ENCODE measurements at regions of chr5 and their contacts with region 1.

Region 1: DNA sequence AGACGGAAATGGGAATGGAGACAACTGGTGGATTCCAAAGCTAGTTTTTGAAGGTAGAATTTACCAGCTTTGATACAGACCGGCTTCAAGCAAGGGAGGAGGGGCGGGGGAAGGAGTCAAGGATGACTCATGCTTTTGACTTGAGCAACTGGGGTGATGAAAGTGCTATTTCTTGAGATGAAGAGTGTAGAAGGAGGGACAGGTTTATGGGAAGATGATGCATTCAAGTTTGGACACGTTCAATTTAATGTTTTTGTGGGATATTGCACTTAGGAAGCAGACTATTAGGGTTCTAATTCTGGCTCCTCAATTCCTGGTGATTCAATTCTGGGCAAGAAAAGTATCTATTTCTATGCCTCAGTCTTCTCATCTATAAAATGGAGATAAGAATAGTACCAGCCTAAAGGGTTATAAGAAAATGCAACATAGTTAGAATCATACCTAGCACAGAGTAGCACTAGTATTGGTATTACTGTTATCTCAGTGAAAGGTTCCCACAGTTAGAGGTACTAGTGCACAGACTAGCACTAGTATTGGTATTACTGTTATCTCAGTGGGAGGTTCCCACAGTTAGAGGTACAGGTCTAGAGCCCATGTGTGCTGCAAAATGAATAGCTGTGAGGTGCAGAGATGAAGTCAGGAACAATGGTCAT is 4.6 kb downstream of the NIPAL4 start:
- DNase-seq: peak; percentile 99
- H3K4me3 Mint-ChIP-seq: peak overlapping the region; percentile 11
- H3K27ac Mint-ChIP-seq: peak overlapping the region; percentile 69
- H3K4me1 Mint-ChIP-seq: peaks cover 38% of the 10 kb centered on the region
- H3K27me3 Mint-ChIP-seq: no peaks in the 10 kb centered on the region
- CTCF ChIP-seq: no peak

Region 2: DNA sequence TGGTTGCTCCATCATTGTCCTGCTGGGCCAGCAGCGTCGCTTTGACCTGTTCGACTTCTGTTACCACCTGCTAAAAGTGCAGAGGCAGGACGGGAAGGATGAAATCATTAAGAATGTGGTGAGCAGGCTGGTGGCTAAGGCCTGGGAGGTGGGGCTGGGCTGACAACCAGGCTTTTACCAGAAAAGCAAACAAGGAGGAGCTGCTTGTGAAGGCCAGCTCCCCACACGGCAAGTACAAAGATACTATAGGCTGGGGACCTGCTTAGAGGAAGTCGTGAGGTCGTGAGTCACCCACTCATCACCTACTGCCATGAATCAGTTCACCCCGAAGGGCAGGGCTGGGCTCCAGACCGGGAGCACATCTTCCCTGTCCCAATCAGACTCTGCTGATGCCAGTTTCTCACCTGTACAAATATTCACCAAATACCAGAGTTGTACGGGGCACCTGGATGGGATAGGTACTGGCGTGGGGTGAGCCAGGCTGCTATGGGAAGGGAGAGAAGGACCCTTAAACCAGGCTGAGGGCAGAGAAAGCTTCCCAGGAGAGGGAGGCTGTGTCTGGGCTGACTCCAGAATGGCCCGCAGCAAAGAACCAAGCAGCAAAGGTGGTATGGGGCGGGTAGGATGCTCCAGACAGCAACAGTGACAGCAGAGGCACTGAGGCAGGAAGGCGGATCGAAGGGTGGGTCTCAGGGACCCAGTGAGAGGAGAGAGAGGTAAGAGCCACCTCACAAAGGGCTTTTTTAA is 73.9 kb before region 1 on chr5:
- CTCF ChIA-PET with region 1: interaction called, 7 read pairs
- POLR2A ChIA-PET with region 1: interaction called, 3 read pairs
- intact Hi-C with region 1: loop called (anchors 5 kb)
- DNase-seq: peak; percentile 98
- H3K4me3 Mint-ChIP-seq: no peak overlapping the region
- H3K27ac Mint-ChIP-seq: peak overlapping the region; percentile 76
- H3K4me1 Mint-ChIP-seq: peaks cover 23% of the 10 kb centered on the region
- H3K27me3 Mint-ChIP-seq: no peaks in the 10 kb centered on the region
- CTCF ChIP-seq: no peak

Region 3: DNA sequence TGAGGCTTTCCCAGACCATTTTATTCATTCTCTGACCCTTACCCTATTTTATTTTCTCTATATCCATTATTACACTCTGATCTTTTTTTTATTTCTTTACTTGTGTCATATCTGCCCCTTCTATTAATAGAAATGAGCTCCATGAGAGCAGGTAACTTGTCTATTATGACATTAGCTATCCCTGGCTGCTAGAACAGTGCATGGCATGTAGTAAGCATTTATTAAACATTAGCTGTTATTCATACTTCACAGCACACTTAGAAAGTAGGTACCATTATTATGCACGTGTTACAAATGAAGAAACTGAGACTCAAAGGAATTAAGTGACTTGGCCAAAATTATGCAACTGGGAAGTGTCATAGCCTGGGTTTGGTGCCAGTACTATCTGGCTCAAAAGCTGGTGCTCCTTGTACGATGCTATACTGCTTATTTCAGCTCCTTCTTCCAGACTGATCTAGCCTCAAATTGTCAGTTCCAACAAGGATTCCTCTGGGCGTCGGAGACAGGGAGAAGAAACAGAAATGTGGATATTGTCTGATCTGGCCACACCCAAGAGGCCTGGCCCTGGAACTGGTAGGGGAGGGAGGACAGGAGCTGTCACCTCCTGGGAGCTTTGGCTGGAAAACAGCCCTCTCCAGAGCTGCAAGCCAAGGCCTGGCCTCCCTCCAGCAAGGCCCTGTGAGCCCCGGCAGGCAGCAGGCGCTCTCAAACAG is 15.5 kb before region 1 on chr5:
- CTCF ChIA-PET with region 1: interaction called, 11 read pairs
- POLR2A ChIA-PET with region 1: interaction called, 23 read pairs
- intact Hi-C with region 1: no loop called
- DNase-seq: peak; percentile 47
- H3K4me3 Mint-ChIP-seq: no peak overlapping the region
- H3K27ac Mint-ChIP-seq: no peak overlapping the region
- H3K4me1 Mint-ChIP-seq: peaks cover 19% of the 10 kb centered on the region
- H3K27me3 Mint-ChIP-seq: no peaks in the 10 kb centered on the region
- CTCF ChIP-seq: no peak

Measured in MCF 10A (cell line).